Aorta (tissue), 5 donors: ENCODE measurements at regions of chrX and their contacts with region 1.

Region 1: DNA sequence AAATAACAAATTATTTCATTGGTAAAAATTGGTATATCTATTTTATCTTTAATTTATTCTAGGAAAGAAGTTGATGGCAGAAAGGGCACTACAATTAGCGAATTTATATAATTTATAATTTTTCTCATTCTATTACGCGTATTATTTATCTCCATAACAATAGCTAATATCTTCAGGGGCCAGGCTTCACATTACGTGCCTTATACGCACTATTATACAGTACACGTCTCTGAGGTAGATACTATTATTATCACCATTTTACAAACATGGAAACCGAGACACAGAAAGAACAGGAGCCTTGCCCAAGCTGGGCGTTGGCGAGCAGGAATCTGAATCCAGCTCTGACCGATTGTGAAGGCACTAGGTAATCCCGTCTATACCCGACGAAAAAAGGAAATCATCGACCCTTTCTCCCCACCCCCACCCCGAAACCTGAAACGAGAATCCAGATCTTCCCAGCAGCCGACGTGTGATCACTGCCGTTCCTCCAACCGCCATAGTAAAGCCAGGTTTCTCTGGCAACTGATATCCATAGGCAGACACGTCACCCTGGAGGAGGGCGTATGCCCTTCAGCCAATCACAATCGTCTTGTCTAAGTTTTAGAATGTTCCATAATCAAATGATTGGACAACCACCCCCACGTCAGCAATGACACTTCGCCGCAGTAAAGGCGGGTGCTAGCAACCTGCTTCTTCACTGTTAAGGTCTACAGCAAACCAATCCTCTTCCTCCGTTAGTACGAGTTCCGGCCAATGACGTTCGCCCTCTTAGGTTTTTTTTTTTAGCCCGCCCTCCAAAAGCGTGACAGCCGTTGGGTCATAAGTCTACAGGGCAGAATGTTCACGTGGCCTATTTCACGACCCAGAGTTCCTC is at the start of gene MORF4L2:
- DNase-seq: peak; percentile 92 to 94
- ATAC-seq: peak; percentile 92
- H3K4me3 ChIP-seq: peak within 1 kb of the TSS; percentile 49 to 90
- H3K27ac ChIP-seq: peak within 1 kb of the TSS in 1 of 2 donors; percentile 99
- H3K4me1 ChIP-seq: no peaks in the 10 kb centered on the region
- H3K27me3 ChIP-seq: no peaks in the 10 kb centered on the region
- total RNA-seq, gene MORF4L2: 214 to 399 TPM

Region 2: GRCh38 chrX:103629318-103630170 is 56.9 kb before region 1 on chrX:
- intact Hi-C with region 1: loop called (anchors 5 kb)
- DNase-seq: peak; percentile 76 to 86
- ATAC-seq: peak; percentile 93
- H3K4me3 ChIP-seq: peak overlapping the region; percentile 44 to 92
- H3K27ac ChIP-seq: peak overlapping the region; percentile 47 to 88
- H3K4me1 ChIP-seq: no peaks in the 10 kb centered on the region
- H3K27me3 ChIP-seq: no peaks in the 10 kb centered on the region

Region 3: GRCh38 chrX:103774070-103774642 is 87.7 kb after region 1 on chrX:
- intact Hi-C with region 1: loop called in 1 of 2 experiments (anchors 2 kb)
- DNase-seq: no peak
- ATAC-seq: no peak
- H3K4me3 ChIP-seq: no peak overlapping the region
- H3K27ac ChIP-seq: no peak overlapping the region
- H3K4me1 ChIP-seq: no peaks in the 10 kb centered on the region
- H3K27me3 ChIP-seq: no peaks in the 10 kb centered on the region

Region 4: DNA sequence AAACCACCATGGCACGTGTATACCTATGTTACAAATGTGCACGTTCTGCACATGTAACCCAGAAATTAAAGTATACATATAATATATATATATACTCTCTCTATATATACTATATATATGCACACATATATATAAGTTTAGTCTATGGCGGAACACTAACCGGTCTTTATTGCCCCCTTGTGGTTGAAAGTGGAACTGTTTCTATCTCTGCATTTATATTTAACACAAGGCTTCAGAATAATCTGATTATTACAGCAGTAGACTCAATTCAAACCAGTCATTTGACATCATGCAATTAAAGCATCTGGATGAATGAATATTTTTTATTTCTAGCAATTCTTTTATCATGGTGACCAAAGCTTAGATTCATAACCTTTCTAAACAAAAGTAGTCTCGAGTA is 131.1 kb after region 1 on chrX:
- intact Hi-C with region 1: loop called (anchors 2 to 5 kb)
- DNase-seq: no peak
- ATAC-seq: peak; percentile 75
- H3K4me3 ChIP-seq: no peak overlapping the region
- H3K27ac ChIP-seq: no peak overlapping the region
- H3K4me1 ChIP-seq: no peaks in the 10 kb centered on the region
- H3K27me3 ChIP-seq: no peaks in the 10 kb centered on the region